Prostate gland (tissue), 2 donors: ENCODE measurements at regions of chr17 and their contacts with region 1.

Region 1: DNA sequence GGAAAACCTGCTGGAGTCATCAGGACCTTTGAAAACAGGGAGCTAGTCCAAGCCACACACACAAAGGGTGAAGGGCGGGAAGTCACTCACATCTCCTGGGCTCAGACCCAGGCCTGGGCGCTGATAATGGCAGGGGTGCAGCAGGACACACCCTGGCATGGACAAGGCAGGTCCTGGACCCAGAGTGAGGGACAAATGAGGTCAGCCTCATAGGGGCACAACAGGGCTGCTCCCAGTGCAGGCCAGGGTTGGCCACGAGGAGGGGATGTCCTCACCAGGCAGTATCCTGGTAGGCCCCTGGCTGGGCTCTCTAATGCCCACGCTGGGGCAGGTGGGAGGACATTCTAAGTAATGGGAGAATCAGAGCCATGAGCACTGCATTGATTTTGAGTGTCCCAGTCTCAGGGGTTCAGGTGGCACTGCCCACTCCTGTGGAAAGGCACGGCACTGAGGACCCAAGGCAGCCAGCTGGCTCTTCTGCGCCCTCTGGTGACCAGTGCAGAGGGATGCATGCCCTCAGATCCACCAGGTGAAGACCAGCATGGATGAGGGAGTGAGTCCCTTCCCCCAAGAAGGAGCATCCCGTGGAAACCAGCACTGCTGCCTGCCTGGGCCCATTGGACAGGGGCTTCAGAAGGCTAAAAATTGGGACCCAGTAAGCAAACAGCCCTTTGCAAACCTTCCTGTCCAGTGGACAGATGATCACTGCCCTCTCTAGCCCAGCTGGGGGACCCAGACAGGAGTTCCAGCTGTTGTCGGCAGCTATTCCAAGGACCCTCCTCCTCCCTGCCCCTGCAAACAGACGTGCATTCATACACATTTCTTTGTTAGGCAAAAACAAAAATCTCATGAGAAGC is 23.4 kb upstream of the SREBF1 start:
- DNase-seq: peak; percentile 72
- H3K4me3 ChIP-seq: no peak overlapping the region
- H3K27ac ChIP-seq: peak overlapping the region; percentile 13 to 17
- H3K4me1 ChIP-seq: peaks cover 4% of the 10 kb centered on the region
- H3K27me3 ChIP-seq: no peaks in the 10 kb centered on the region
- CTCF ChIP-seq: peak; percentile 93 to 99 (median 96)
- POLR2A ChIP-seq: no peak

Region 2: GRCh38 chr17:17681187-17681848 is 178.8 kb before region 1 on chr17 and contains the start of gene RAI1:
- intact Hi-C with region 1: loop called (anchors 1 kb)
- DNase-seq: peak; percentile 78
- H3K4me3 ChIP-seq: peak within 1 kb of the TSS; percentile 77 to 82
- H3K27ac ChIP-seq: peak within 1 kb of the TSS; percentile 94 to 99
- H3K4me1 ChIP-seq: peaks cover 30% of the 10 kb centered on the region
- H3K27me3 ChIP-seq: no peaks in the 10 kb centered on the region
- CTCF ChIP-seq: peak; percentile 72 to 99 (median 92)
- POLR2A ChIP-seq: peak; percentile 46
- total RNA-seq, gene RAI1: 69.2 to 71.0 TPM

Region 3: GRCh38 chr17:17757391-17757791 is 102.7 kb before region 1 on chr17:
- intact Hi-C with region 1: no loop called
- DNase-seq: no peak
- H3K4me3 ChIP-seq: no peak overlapping the region
- H3K27ac ChIP-seq: no peak overlapping the region
- H3K4me1 ChIP-seq: peaks cover 7% of the 10 kb centered on the region
- H3K27me3 ChIP-seq: no peaks in the 10 kb centered on the region
- CTCF ChIP-seq: no peak
- POLR2A ChIP-seq: no peak

Region 4: GRCh38 chr17:17812211-17813057 is 47.7 kb before region 1 on chr17:
- intact Hi-C with region 1: loop called (anchors 2 kb)
- DNase-seq: peak; percentile 62
- H3K4me3 ChIP-seq: no peak overlapping the region
- H3K27ac ChIP-seq: peak overlapping the region; percentile 80 to 94
- H3K4me1 ChIP-seq: peaks cover 25% of the 10 kb centered on the region
- H3K27me3 ChIP-seq: no peaks in the 10 kb centered on the region
- CTCF ChIP-seq: peak; percentile 98 to 99 (median 99)
- POLR2A ChIP-seq: no peak

Region 5: GRCh38 chr17:17900615-17901520 is 40.7 kb after region 1 on chr17:
- intact Hi-C with region 1: no loop called
- DNase-seq: peak; percentile 85
- H3K4me3 ChIP-seq: no peak overlapping the region
- H3K27ac ChIP-seq: peak overlapping the region; percentile 40 to 63
- H3K4me1 ChIP-seq: peaks cover 2% of the 10 kb centered on the region
- H3K27me3 ChIP-seq: no peaks in the 10 kb centered on the region
- CTCF ChIP-seq: no peak
- POLR2A ChIP-seq: no peak